Tibial artery (tissue), 4 donors: ENCODE measurements at regions of chr2 and their contacts with region 1.

Region 1: DNA sequence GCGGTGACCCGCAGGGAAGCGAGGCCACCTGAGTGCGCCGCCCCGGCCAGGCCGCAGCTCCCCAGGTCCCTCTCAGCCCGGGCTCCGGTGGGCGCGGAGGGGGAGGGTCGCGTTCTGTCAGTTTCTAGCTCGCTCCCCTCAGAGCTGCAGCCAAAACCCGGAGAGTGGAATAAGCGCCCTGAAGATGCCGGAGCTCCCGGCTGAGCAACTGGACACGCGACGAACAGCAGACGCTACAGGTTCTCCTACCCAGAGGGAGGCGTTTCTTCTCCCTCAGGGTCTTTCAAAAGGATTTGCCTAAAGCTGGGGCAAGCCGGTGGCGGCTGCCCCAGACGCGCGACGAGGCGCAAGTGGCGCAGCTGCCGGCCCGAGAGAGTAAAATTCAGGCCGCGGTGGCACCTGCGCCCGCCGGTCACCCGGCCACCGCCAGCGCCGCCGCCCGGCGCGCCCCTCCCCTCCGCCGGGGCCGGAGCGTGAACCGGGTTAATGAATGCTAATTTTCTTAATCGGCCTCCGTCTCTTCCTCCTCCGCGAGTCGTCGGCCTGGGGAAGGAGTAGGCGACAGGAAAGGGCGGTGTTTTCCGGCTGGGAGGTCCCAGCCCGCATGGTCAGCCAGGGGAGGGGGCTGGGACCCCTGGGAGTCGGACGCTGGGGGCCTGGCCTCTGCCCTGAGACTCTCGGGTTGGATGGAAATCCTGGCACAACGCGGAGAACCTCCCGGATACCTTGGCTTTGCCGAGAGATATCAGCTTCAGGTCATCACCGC is 845 bp upstream of the CDC42EP3 start:
- DNase-seq: peak; percentile 66 to 85
- H3K4me3 ChIP-seq: peak overlapping the region; percentile 74 to 97
- H3K27ac ChIP-seq: peak overlapping the region; percentile 97
- H3K4me1 ChIP-seq: peaks cover 0 to 30% (median 18%) of the 10 kb centered on the region in 4 donors
- H3K27me3 ChIP-seq: no peaks in the 10 kb centered on the region
- CTCF ChIP-seq: no peak

Region 2: DNA sequence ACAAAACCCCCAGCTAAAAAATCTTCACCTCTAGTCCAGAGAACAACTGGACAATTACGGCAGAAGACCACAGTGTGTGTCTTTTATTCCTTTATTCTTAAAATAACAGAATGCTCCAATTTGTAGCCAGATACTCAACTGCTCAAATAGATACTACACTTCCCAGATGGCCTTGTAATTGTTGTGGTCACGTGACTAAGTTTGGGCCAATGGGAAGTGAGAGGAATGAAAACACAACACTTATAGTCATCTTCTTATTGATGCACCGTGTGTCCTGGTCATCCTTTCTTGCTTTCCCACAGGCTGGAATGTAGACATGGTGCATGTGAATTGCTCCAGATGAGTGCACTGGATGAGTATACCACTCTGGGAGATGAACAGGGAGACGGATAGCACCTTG is 146.0 kb before region 1 on chr2:
- intact Hi-C with region 1: loop called (anchors 5 kb)
- DNase-seq: no peak
- H3K4me3 ChIP-seq: no peak overlapping the region
- H3K27ac ChIP-seq: no peak overlapping the region
- H3K4me1 ChIP-seq: peaks cover 0 to 45% (median 19%) of the 10 kb centered on the region in 4 donors
- H3K27me3 ChIP-seq: no peaks in the 10 kb centered on the region
- CTCF ChIP-seq: no peak

Region 3: DNA sequence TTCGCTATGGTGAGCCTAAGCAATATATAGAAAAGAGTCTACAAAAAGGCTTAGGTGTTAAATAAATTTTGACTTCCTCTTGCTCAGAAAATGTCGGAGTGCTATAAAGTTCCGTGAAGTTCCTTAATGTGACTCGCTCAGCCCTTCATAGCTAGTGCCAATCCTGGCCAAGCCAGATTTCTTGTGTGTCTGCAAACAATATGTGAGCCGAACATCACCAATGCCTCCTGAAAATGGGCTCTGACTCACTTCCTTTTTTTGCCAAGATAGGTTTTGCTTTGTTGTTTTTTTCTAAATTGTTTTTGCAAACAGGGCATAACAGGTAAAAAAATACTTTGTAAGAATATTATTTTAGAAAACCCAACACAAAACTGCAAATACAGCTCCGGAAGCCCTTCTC is 26.9 kb before region 1 on chr2:
- intact Hi-C with region 1: no loop called
- DNase-seq: no peak
- H3K4me3 ChIP-seq: no peak overlapping the region
- H3K27ac ChIP-seq: no peak overlapping the region
- H3K4me1 ChIP-seq: peaks cover 0 to 76% (median 41%) of the 10 kb centered on the region in 4 donors
- H3K27me3 ChIP-seq: no peaks in the 10 kb centered on the region
- CTCF ChIP-seq: no peak